ENCODE measurements at regions of chr20 and their contacts with region 1.

Region 1: GRCh38 chr20:9978397-9979004 is 56.3 kb upstream of the ANKEF1 start:
- DNase-seq: peak; percentile 35
- H3K4me3 Mint-ChIP-seq: no peak overlapping the region
- H3K27ac Mint-ChIP-seq: no peak overlapping the region
- H3K4me1 Mint-ChIP-seq: no peaks in the 10 kb centered on the region
- H3K27me3 Mint-ChIP-seq: peaks cover 12% of the 10 kb centered on the region
- CTCF ChIP-seq: peak; percentile 35

Region 2: DNA sequence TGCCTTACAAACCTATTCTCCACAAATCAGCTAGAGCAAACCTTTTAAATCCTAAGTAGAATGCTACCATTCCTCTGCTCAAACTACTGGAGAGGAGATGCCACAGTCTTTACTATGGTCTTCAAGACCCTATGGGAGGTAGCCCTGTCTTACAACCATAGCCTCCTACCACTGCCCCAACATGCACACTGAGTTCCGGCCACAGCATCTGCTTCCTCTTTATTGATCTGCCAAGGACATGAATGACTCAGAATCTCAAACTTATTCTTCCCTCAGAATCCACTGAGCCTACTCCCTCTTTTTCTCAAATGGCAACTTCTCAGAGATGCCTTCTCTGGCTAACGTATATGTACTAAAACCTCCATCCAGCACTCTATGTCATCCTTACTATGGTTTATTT is 44.1 kb after region 1 on chr20:
- CTCF ChIA-PET with region 1: no interaction called
- intact Hi-C with region 1: no loop called
- DNase-seq: no peak
- H3K4me3 Mint-ChIP-seq: no peak overlapping the region
- H3K27ac Mint-ChIP-seq: no peak overlapping the region
- H3K4me1 Mint-ChIP-seq: no peaks in the 10 kb centered on the region
- H3K27me3 Mint-ChIP-seq: no peaks in the 10 kb centered on the region
- CTCF ChIP-seq: no peak

Region 3: GRCh38 chr20:10090588-10091166 is 112.2 kb after region 1 on chr20:
- CTCF ChIA-PET with region 1: interaction called, 22 read pairs
- intact Hi-C with region 1: loop called (anchors 1 kb)
- DNase-seq: peak; percentile 50
- H3K4me3 Mint-ChIP-seq: no peak overlapping the region
- H3K27ac Mint-ChIP-seq: no peak overlapping the region
- H3K4me1 Mint-ChIP-seq: peaks cover 8% of the 10 kb centered on the region
- H3K27me3 Mint-ChIP-seq: no peaks in the 10 kb centered on the region
- CTCF ChIP-seq: peak; percentile 31

Region 4: GRCh38 chr20:10200330-10200729 is 221.8 kb after region 1 on chr20:
- CTCF ChIA-PET with region 1: no interaction called
- intact Hi-C with region 1: no loop called
- DNase-seq: no peak
- H3K4me3 Mint-ChIP-seq: no peak overlapping the region
- H3K27ac Mint-ChIP-seq: no peak overlapping the region
- H3K4me1 Mint-ChIP-seq: no peaks in the 10 kb centered on the region
- H3K27me3 Mint-ChIP-seq: peaks cover 2% of the 10 kb centered on the region
- CTCF ChIP-seq: no peak

Region 5: GRCh38 chr20:10352934-10353866 is 374.7 kb after region 1 on chr20:
- CTCF ChIA-PET with region 1: no interaction called
- intact Hi-C with region 1: loop called (anchors 1 kb)
- DNase-seq: peak; percentile 32
- H3K4me3 Mint-ChIP-seq: peak overlapping the region; percentile 37
- H3K27ac Mint-ChIP-seq: peak overlapping the region; percentile 89
- H3K4me1 Mint-ChIP-seq: peaks cover 37% of the 10 kb centered on the region
- H3K27me3 Mint-ChIP-seq: no peaks in the 10 kb centered on the region
- CTCF ChIP-seq: no peak

Region 6: GRCh38 chr20:10427060-10427692 is 448.7 kb after region 1 on chr20:
- CTCF ChIA-PET with region 1: interaction called, 3 read pairs
- intact Hi-C with region 1: loop called (anchors 1 kb)
- DNase-seq: peak; percentile 32
- H3K4me3 Mint-ChIP-seq: no peak overlapping the region
- H3K27ac Mint-ChIP-seq: peak overlapping the region; percentile 57
- H3K4me1 Mint-ChIP-seq: peaks cover 64% of the 10 kb centered on the region
- H3K27me3 Mint-ChIP-seq: no peaks in the 10 kb centered on the region
- CTCF ChIP-seq: peak; percentile 36

Region 7: DNA sequence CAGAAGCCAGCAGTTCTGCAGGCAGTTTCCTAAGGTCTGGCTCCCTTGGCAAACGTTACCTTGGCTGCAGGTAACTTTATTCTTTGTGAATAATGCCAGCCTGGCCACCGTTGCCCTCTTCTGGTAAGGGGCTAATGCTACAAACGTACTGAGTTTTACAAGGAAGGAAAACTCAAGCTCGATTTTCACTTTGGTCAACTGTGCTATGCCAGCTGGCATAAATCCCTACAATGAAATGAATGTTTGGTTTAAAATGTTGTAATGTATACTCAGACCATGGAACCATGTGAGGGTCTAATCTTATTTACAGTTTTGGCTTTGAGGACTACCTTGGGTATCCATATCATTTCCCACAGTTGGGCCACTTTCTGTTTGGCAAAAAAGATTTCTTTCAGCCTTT is 558.0 kb after region 1 on chr20:
- CTCF ChIA-PET with region 1: interaction called, 3 read pairs
- intact Hi-C with region 1: loop called (anchors 5 kb)
- DNase-seq: peak; percentile 35
- H3K4me3 Mint-ChIP-seq: no peak overlapping the region
- H3K27ac Mint-ChIP-seq: no peak overlapping the region
- H3K4me1 Mint-ChIP-seq: peaks cover 16% of the 10 kb centered on the region
- H3K27me3 Mint-ChIP-seq: no peaks in the 10 kb centered on the region
- CTCF ChIP-seq: peak; percentile 23